ENCODE measurements at regions of chr4 and their contacts with region 1.

Region 1: DNA sequence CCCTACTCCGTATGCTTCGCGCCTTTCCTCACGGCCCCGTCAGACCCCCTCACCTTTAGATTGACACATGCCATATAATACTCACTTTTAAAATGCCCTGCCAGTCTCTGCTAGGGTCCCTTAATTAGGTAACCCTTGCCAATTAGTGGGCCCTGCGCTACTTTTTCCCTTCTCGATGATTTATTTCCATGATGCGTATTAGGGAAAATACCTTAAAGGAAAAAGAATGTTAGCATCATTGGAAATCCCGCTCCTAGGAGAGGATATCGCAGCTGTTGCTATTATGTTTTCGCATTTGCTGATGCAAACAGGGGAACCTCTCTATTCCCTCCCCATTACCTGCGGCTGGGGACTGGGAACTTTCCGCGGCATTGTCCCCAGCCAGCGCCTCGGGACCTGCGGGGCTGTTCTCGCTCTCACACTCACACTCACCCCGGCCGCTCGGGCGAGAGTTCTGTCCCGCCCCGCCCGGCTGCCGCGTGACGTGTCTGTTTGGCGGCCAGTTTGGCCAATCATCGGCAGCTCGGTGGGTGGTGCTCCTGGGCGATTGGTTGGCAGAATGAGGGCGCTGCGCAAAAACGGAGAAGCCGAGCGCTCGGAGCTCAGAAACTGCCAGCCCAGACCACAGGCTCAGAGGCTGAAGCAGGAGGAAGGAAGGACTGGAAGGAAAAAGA is at the start of gene PCDH10:
- DNase-seq: peak; percentile 98
- H3K4me3 ChIP-seq: peak within 1 kb of the TSS; percentile 72 to 90 (median 77)
- H3K27ac ChIP-seq: peak within 1 kb of the TSS; percentile 67
- H3K4me1 ChIP-seq: peaks cover 33% of the 10 kb centered on the region
- H3K27me3 ChIP-seq: no peaks in the 10 kb centered on the region
- CTCF ChIP-seq: no peak
- POLR2A ChIP-seq: peak; percentile 96
- total RNA-seq, gene PCDH10: 56.5 and 91.7 TPM in 2 replicates

Region 2: DNA sequence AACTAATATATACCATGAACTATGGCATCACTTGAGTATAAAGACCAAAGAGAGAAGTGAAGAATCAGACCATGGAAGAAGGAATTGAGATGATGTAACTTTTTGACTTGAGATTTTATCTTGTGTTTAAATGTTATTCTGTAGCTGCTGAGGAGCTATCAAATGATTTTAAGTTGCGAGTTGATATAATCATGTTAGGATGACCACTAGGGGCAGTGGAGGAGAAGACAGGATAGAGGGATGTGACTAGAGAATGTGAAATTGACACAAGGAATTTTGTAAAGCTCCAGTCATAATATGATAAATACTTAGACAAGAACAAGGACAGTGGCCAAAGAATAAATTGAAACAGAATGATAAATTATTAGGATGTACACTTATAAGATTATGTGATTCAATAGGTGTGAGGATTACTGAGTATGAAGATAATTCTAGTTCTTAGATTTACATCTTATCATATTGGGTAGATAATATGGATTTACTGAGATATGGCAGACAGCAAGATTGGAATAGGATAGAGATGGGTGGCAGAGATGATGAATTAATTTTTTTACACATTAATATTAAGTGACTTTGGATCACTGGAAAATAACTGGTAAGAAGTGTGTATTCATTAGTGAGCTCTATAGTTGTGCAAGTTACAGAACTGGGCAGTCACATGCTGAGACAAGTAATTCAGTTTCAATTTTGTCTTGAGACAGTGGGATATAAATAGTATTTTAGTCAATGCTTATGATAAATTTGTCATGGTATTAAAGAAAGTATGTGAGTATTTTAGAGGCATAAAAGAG is 815.7 kb before region 1 on chr4:
- CTCF ChIA-PET with region 1: no interaction called
- POLR2A ChIA-PET with region 1: no interaction called
- dilution Hi-C with region 1: no loop called
- intact Hi-C with region 1: no loop called
- DNase-seq: peak; percentile 8
- H3K4me3 ChIP-seq: no peak overlapping the region
- H3K27ac ChIP-seq: no peak overlapping the region
- H3K4me1 ChIP-seq: no peaks in the 10 kb centered on the region
- H3K27me3 ChIP-seq: no peaks in the 10 kb centered on the region
- CTCF ChIP-seq: peak in 1 of 2 donors; percentile 24
- POLR2A ChIP-seq: no peak

Region 3: DNA sequence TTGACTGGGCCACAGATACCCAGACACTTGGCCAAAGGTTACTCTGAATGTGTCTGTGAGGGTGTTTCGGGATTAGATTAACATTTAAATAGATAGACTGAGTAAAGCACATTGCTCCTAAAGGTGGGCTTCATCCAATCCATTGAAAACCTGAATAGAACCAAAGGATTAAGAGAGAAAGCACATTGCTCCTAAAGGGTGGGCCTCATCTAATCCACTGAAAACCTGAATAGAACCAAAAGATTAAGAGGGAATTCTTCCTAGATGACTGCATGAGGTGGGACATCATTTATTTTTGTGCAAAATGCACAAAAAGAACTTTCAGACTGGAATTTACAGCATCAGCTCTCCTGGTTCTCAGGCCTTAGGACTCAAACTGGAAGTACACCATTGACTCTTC is 351.0 kb before region 1 on chr4:
- CTCF ChIA-PET with region 1: no interaction called
- POLR2A ChIA-PET with region 1: no interaction called
- dilution Hi-C with region 1: no loop called
- intact Hi-C with region 1: no loop called
- DNase-seq: no peak
- H3K4me3 ChIP-seq: no peak overlapping the region
- H3K27ac ChIP-seq: no peak overlapping the region
- H3K4me1 ChIP-seq: no peaks in the 10 kb centered on the region
- H3K27me3 ChIP-seq: no peaks in the 10 kb centered on the region
- CTCF ChIP-seq: no peak
- POLR2A ChIP-seq: no peak

Region 4: GRCh38 chr4:132839070-132839469 is 309.8 kb before region 1 on chr4:
- CTCF ChIA-PET with region 1: no interaction called
- POLR2A ChIA-PET with region 1: no interaction called
- dilution Hi-C with region 1: no loop called
- intact Hi-C with region 1: loop called (anchors 2 kb)
- DNase-seq: no peak
- H3K4me3 ChIP-seq: no peak overlapping the region
- H3K27ac ChIP-seq: no peak overlapping the region
- H3K4me1 ChIP-seq: no peaks in the 10 kb centered on the region
- H3K27me3 ChIP-seq: no peaks in the 10 kb centered on the region
- CTCF ChIP-seq: no peak
- POLR2A ChIP-seq: no peak

Region 5: DNA sequence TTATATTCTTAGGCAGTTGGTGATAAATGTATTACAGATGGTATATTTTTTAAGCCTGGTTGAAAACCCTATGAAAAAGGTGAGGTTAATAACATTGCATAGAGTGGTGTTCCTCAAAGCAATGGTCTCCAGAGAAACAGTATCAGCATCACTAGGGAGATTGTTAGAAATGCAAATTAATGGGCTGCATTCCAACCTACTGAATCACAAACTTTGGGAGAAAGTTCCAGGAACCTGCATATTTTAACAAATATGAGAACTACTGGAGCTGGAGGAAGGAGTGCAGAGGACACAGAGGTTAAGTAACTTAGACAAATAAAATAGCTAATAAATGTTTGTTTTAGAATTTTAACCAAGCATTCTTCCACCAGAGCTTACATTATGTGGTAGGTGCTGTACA is 166.7 kb before region 1 on chr4:
- CTCF ChIA-PET with region 1: no interaction called
- POLR2A ChIA-PET with region 1: no interaction called
- dilution Hi-C with region 1: no loop called
- intact Hi-C with region 1: no loop called
- DNase-seq: peak; percentile 37
- H3K4me3 ChIP-seq: no peak overlapping the region
- H3K27ac ChIP-seq: no peak overlapping the region
- H3K4me1 ChIP-seq: peaks cover 11% of the 10 kb centered on the region
- H3K27me3 ChIP-seq: no peaks in the 10 kb centered on the region
- CTCF ChIP-seq: no peak
- POLR2A ChIP-seq: no peak

Region 6: DNA sequence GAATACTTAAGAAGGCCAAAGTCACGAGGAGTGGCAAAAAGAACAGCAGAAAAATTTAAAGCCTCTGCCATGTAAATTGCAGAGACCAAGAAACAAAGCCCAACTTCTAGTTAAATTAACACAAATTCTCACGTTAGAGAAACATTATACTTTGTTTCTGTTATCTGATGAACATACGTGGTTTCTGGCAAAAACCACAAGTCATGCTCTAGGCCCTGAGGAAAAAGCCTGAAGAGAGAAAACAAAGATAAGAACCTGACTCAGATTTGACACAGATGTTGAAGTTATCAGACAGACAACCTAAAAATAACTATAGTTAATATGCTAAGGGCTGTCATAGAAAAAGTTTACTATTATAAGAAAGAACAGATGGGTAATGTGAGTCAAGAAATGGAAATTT is 148.8 kb before region 1 on chr4:
- CTCF ChIA-PET with region 1: interaction called, 4 read pairs
- POLR2A ChIA-PET with region 1: no interaction called
- dilution Hi-C with region 1: no loop called
- intact Hi-C with region 1: loop called (anchors 1 kb)
- DNase-seq: peak; percentile 95
- H3K4me3 ChIP-seq: no peak overlapping the region
- H3K27ac ChIP-seq: peak overlapping the region; percentile 88
- H3K4me1 ChIP-seq: peaks cover 21% of the 10 kb centered on the region
- H3K27me3 ChIP-seq: no peaks in the 10 kb centered on the region
- CTCF ChIP-seq: no peak
- POLR2A ChIP-seq: peak; percentile 59

Region 7: GRCh38 chr4:133320576-133321170 is 171.8 kb after region 1 on chr4:
- CTCF ChIA-PET with region 1: interaction called, 21 read pairs
- POLR2A ChIA-PET with region 1: no interaction called
- dilution Hi-C with region 1: no loop called
- intact Hi-C with region 1: loop called (anchors 5 kb)
- DNase-seq: peak; percentile 51
- H3K4me3 ChIP-seq: no peak overlapping the region
- H3K27ac ChIP-seq: no peak overlapping the region
- H3K4me1 ChIP-seq: no peaks in the 10 kb centered on the region
- H3K27me3 ChIP-seq: no peaks in the 10 kb centered on the region
- CTCF ChIP-seq: peak; percentile 54 to 63
- POLR2A ChIP-seq: no peak

Region 8: GRCh38 chr4:134201216-134202098 is 1052.6 kb after region 1 on chr4 and contains the start of gene PABPC4L:
- CTCF ChIA-PET with region 1: no interaction called
- POLR2A ChIA-PET with region 1: no interaction called
- dilution Hi-C with region 1: no loop called
- intact Hi-C with region 1: loop called (anchors 10 kb)
- DNase-seq: peak; percentile 77
- H3K4me3 ChIP-seq: peak within 1 kb of the TSS; percentile 42 to 69 (median 62)
- H3K27ac ChIP-seq: no peak within 1 kb of the TSS
- H3K4me1 ChIP-seq: peaks cover 4% of the 10 kb centered on the region
- H3K27me3 ChIP-seq: no peaks in the 10 kb centered on the region
- CTCF ChIP-seq: no peak
- POLR2A ChIP-seq: no peak
- total RNA-seq, gene PABPC4L: 1.3 and 1.6 TPM in 2 replicates

Region 9: GRCh38 chr4:134906404-134907023 is 1757.7 kb after region 1 on chr4:
- CTCF ChIA-PET with region 1: interaction called, 21 read pairs
- POLR2A ChIA-PET with region 1: no interaction called
- dilution Hi-C with region 1: no loop called
- intact Hi-C with region 1: loop called (anchors 2 kb)
- DNase-seq: peak; percentile 40
- H3K4me3 ChIP-seq: no peak overlapping the region
- H3K27ac ChIP-seq: no peak overlapping the region
- H3K4me1 ChIP-seq: no peaks in the 10 kb centered on the region
- H3K27me3 ChIP-seq: no peaks in the 10 kb centered on the region
- CTCF ChIP-seq: peak in 1 of 2 donors; percentile 22
- POLR2A ChIP-seq: no peak

Measured in endothelial cell of umbilical vein (primary cell).